Endothelial cell of umbilical vein (primary cell): ENCODE measurements at regions of chr9 and their contacts with region 1.

Region 1: GRCh38 chr9:111926421-111926875 is 29.8 kb downstream of the UGCG start:
- DNase-seq: peak; percentile 95
- H3K4me3 ChIP-seq: no peak overlapping the region
- H3K27ac ChIP-seq: peak overlapping the region; percentile 99
- H3K4me1 ChIP-seq: peaks cover 39% of the 10 kb centered on the region
- H3K27me3 ChIP-seq: no peaks in the 10 kb centered on the region
- CTCF ChIP-seq: no peak
- POLR2A ChIP-seq: no peak

Region 2: DNA sequence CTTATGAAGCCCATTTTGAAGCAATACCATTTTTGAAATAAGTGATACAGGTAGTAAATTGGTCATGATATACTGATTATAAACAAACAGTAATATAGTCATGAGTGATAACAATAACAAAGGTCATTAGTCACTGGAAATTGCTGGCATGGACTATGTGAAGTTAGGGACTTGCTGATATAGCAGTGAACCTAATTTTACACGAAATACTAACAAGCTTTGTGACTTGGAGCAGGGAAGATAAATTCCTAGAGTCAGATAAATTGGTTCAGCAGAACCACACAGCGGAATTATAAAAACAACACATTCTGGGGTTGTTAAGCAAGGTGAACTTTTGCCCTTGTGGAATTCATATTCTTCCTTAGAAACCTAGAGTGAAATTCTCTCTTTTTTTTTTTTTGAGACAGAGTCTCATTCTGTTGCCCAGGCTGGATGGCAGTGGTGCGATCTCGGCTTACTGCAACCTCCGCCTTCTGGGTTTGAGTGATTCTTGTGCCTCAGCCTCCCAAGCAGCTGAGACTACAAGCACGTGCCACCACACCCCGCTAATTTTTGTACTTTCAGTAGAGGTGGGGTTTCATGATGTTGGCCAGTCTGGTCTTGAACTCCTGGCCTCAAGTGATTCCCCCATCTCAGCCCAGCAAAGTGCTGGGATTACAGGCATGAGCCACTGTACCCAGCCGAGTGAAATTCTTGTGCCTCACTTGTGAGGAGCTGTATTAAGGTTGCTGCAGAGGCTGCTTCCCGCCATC is 23.9 kb before region 1 on chr9:
- CTCF ChIA-PET with region 1: interaction called, 6 read pairs
- POLR2A ChIA-PET with region 1: interaction called, 12 read pairs
- dilution Hi-C with region 1: no loop called
- intact Hi-C with region 1: loop called (anchors 1 kb)
- DNase-seq: peak; percentile 82
- H3K4me3 ChIP-seq: no peak overlapping the region
- H3K27ac ChIP-seq: peak overlapping the region; percentile 38
- H3K4me1 ChIP-seq: peaks cover 33% of the 10 kb centered on the region
- H3K27me3 ChIP-seq: no peaks in the 10 kb centered on the region
- CTCF ChIP-seq: no peak
- POLR2A ChIP-seq: no peak

Region 3: GRCh38 chr9:111909441-111909840 is 17.0 kb before region 1 on chr9:
- CTCF ChIA-PET with region 1: interaction called, 18 read pairs
- POLR2A ChIA-PET with region 1: interaction called, 12 read pairs
- dilution Hi-C with region 1: no loop called
- intact Hi-C with region 1: no loop called
- DNase-seq: no peak
- H3K4me3 ChIP-seq: no peak overlapping the region
- H3K27ac ChIP-seq: no peak overlapping the region
- H3K4me1 ChIP-seq: peaks cover 4% of the 10 kb centered on the region
- H3K27me3 ChIP-seq: no peaks in the 10 kb centered on the region
- CTCF ChIP-seq: no peak
- POLR2A ChIP-seq: no peak

Region 4: DNA sequence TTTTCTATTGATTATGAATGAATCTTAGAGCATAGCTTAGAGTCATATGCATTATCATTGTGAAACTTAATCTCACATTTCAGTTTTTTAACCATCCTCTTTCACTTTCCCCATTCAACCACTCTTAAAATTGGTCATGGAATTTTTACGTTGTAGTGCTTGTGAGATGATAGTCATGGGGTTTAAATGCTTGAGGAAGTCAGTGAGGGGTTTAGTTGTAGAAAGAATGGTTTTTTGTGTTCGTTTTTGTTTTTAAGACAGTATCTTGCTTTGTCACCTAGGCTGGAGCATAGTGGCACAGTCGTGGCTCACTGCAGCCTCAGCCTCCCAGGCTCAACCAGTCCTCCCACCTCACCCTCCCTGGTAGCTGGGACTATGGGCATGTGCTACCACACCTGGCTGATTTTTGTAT is 10.2 kb before region 1 on chr9:
- CTCF ChIA-PET with region 1: interaction called, 18 read pairs
- POLR2A ChIA-PET with region 1: no interaction called
- dilution Hi-C with region 1: no loop called
- intact Hi-C with region 1: no loop called
- DNase-seq: no peak
- H3K4me3 ChIP-seq: no peak overlapping the region
- H3K27ac ChIP-seq: no peak overlapping the region
- H3K4me1 ChIP-seq: peaks cover 11% of the 10 kb centered on the region
- H3K27me3 ChIP-seq: no peaks in the 10 kb centered on the region
- CTCF ChIP-seq: no peak
- POLR2A ChIP-seq: no peak

Region 5: DNA sequence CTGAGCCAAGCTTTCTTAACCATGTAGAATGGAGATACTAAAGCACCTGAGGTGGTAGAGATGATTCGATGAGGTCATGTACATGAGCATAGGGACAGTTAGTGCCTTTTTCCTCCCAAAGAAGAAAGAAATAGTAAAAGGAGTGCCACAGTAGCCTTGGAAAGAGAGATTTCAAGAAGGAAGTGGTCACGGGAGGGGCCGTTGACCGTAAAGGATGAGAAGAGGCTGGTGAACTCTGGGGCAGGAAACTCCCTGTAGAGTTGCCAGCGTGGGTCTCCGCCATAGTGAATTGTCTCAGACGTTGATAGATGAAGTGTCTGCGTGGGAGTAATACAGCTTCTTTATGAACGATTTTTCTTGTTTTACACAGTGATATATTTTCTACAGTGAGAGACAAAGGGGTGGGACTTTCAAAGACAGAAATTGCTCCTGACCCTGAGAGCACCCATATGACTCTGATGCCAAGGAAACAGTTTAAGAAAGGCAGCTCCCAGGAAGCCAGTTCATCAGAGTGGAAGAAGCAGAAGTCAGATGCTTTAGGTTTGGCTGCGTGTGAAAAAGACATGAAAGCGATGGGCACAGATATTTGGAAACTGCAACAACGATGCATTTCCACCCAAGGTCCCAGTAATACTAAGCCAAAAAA is 11.5 kb after region 1 on chr9:
- CTCF ChIA-PET with region 1: interaction called, 3 read pairs
- POLR2A ChIA-PET with region 1: interaction called, 3 read pairs
- dilution Hi-C with region 1: no loop called
- intact Hi-C with region 1: loop called (anchors 2 kb)
- DNase-seq: peak; percentile 52
- H3K4me3 ChIP-seq: no peak overlapping the region
- H3K27ac ChIP-seq: no peak overlapping the region
- H3K4me1 ChIP-seq: peaks cover 6% of the 10 kb centered on the region
- H3K27me3 ChIP-seq: no peaks in the 10 kb centered on the region
- CTCF ChIP-seq: no peak
- POLR2A ChIP-seq: no peak